ENCODE measurements at regions of chr3 and their contacts with region 1.

Region 1: GRCh38 chr3:141011232-141011996 is 39.7 kb upstream of the SPSB4 start:
- DNase-seq: no peak
- H3K4me3 ChIP-seq: no peak overlapping the region
- H3K27me3 ChIP-seq: no peaks in the 10 kb centered on the region
- CTCF ChIP-seq: peak; percentile 85

Region 2: DNA sequence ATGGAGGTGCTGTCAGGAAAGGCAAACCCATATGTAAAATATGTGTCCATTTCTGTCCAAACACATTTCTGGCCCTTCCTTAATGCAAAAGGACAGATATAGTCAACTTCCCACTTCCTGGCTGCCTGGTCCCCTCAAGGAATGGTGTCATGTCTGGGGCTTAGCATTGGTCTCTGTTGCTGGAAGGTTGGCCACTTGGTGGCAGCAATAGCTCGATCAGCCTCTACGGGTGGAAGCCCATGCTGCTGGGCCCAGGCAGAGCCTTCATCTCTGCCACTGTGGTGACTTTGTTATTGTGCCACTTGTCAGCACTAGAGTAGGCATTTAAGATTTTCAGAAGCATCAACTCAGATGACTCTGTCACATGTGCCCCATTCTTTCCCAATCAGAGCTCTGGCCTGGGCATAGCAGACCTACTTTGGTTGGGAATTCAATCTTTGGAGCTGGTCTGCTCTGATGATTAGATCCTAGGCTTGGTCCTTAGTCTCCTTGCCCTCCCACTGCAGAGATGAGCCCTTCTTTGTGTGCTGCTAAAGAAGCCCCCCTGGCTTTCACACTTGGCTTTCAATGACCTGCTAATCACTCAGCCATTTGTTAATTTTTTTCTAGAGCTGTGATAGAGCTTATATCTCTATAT is 11.3 kb before region 1 on chr3:
- CTCF ChIA-PET with region 1: interaction called, 67 read pairs
- POLR2A ChIA-PET with region 1: no interaction called
- DNase-seq: no peak
- H3K4me3 ChIP-seq: no peak overlapping the region
- H3K27me3 ChIP-seq: no peaks in the 10 kb centered on the region
- CTCF ChIP-seq: peak; percentile 72

Region 3: DNA sequence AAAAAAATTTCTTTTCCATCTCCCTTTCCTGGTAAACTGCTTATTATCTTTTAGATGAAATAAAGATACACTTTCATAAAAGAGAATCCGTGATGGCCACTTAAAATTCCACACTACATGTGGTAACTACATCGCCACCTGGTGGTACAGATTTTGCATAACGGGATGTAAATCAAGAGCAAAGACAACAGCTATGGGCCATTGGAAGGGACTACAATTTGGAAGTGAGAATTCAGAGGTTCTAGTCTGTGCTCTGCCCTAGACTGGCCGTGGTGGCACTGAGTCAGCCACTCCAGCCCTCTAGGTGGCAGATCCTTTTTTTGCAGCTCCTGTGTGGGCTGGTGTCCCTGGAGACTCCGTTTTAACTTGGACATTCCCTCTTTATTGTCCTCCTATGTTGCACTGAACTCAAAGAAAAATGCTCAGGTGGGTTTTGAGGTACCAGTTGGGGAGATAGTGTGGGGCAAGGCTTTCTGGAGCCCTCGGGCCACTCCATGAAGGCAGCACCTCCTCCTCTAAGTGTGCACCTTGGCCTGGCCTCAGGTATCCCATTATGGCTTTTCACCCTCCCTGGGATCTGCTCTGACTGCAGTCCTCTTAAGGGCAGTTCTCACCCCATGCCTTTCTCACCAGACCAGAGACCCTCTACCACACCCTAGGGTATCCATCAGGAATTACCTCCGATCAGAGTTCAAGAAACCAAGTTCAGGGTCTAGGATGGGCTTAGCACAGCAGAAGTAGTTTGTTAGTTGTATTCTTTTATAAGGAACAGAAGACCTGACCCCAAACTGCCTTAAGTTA is 94.6 kb after region 1 on chr3:
- CTCF ChIA-PET with region 1: interaction called, 18 read pairs
- POLR2A ChIA-PET with region 1: no interaction called
- DNase-seq: peak; percentile 31
- H3K4me3 ChIP-seq: no peak overlapping the region
- H3K27me3 ChIP-seq: no peaks in the 10 kb centered on the region; the same call in 1 of the 2 replicates
- CTCF ChIP-seq: peak; percentile 73